T-cell (primary cell): ENCODE measurements at regions of chr3 and their contacts with region 1.

Region 1: DNA sequence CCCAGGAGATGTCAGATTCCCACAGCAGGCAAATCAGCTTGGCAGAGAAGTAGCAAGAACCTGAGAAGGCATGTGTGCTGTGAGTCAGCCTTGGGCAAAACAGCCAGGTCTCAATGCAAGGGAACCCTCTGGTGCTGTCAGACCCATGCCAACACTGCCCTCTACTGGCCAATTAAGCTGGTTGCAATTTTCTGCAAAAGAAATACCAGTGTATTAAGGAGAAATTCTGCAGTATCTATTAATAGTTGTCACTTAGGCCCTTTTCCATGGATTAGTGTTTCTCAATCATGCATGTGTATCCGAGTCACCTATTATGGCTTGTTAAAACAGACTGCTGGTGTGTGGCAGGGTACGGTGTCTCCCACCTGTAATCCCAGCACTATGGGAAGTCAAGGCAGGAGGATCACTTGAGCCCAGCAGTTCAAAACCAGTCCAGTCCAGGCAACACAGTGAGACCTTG is 26.2 kb downstream of the MAP4 start:
- DNase-seq: peak; percentile 16 to 86 (median 61)
- ATAC-seq: peak; percentile 86 to 95 (median 91)
- H3K4me3 ChIP-seq: no peak overlapping the region
- H3K4me3 Mint-ChIP-seq: no peak overlapping the region
- H3K27ac ChIP-seq: no peak overlapping the region
- H3K27ac Mint-ChIP-seq: no peak overlapping the region
- H3K4me1 ChIP-seq: no peaks in the 10 kb centered on the region
- H3K4me1 Mint-ChIP-seq: peaks cover 3 to 5% (median 4%) of the 10 kb centered on the region in 3 donors
- H3K27me3 ChIP-seq: no peaks in the 10 kb centered on the region
- H3K27me3 Mint-ChIP-seq: no peaks in the 10 kb centered on the region

Region 2: DNA sequence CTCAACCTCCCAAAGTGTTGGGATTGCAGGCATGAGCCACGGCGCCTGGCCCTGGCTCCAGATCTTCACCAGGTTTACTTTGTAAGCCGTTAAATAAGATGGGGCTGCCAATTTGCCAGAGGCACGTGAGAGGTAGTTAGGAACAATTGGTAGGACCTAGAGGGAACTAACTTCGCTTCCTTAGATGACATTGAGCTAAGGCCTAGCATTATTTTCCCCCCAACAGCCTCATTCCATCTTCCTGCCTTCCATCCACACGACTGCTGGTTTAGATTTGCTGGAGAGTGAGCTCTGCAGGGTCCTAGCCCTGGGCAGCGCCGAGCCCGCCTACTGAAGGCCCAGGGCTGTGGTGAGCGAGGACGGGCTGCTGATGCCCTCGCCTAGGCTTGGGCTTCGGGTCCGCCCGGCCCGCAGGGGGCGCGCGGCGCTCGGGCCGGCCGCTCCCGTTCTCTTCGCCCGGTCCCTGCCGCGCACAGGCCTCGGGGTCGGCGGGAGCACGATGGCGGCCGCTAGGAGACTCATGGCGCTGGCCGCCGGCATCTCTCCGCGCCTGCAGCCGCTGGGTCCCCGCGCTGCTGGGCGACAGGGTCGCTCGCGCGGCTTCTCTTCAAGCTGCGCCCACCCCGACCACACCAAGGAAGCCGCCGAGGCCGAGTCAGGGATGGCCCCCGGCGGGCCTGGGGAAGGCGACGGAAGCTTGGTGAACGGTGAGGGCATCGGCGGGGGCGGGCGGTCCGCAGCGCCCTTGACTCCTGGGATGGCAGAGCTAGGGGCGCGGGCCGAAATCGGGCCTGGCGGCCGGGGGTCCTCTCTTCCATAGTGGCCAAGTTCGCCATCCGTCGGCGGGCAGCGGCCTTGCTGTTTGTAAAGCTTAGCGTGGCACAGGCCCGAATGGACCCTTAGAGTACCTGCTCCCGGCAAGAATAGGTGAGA is 165.2 kb before region 1 on chr3:
- CTCF ChIA-PET with region 1: interaction called, 3 to 20 read pairs
- POLR2A ChIA-PET with region 1: no interaction called
- DNase-seq: peak; percentile 46 to 89 (median 70)
- ATAC-seq: peak; percentile 98 to 99 (median 99)
- H3K4me3 ChIP-seq: peak overlapping the region; percentile 77 to 81
- H3K4me3 Mint-ChIP-seq: peak overlapping the region; percentile 83 to 87 (median 83)
- H3K27ac ChIP-seq: peak overlapping the region; percentile 66
- H3K27ac Mint-ChIP-seq: peak overlapping the region; percentile 68 to 92
- H3K4me1 ChIP-seq: peaks cover 10 to 23% of the 10 kb centered on the region in 2 experiments
- H3K4me1 Mint-ChIP-seq: peaks cover 20 to 36% (median 30%) of the 10 kb centered on the region in 3 donors
- H3K27me3 ChIP-seq: no peaks in the 10 kb centered on the region
- H3K27me3 Mint-ChIP-seq: no peaks in the 10 kb centered on the region

Region 3: DNA sequence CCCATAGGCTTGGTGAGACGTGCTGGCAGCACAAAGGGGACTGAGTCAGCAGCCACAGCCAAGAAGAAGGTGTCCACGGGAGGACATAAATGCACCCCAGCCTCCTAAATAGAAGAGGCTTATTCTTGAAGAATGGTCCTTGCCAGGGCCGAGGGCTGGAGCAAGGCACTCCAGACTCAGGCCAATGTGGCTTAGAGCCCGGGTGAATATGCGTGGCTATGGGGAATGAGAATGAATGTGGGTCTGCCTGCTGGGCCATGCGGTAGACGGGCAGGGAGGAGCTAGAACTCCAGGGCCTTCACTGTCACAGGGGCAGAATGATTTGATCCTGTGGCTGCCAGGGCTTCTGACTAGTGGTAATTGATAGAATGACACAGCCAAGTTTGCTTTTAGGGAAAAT is 153.0 kb before region 1 on chr3:
- CTCF ChIA-PET with region 1: interaction called, 9 to 27 read pairs
- POLR2A ChIA-PET with region 1: no interaction called
- DNase-seq: no peak
- ATAC-seq: no peak
- H3K4me3 ChIP-seq: no peak overlapping the region
- H3K4me3 Mint-ChIP-seq: no peak overlapping the region
- H3K27ac ChIP-seq: no peak overlapping the region
- H3K27ac Mint-ChIP-seq: no peak overlapping the region
- H3K4me1 ChIP-seq: no peaks in the 10 kb centered on the region
- H3K4me1 Mint-ChIP-seq: peaks cover 0 to 5% (median 3%) of the 10 kb centered on the region in 3 donors
- H3K27me3 ChIP-seq: no peaks in the 10 kb centered on the region
- H3K27me3 Mint-ChIP-seq: no peaks in the 10 kb centered on the region

Region 4: DNA sequence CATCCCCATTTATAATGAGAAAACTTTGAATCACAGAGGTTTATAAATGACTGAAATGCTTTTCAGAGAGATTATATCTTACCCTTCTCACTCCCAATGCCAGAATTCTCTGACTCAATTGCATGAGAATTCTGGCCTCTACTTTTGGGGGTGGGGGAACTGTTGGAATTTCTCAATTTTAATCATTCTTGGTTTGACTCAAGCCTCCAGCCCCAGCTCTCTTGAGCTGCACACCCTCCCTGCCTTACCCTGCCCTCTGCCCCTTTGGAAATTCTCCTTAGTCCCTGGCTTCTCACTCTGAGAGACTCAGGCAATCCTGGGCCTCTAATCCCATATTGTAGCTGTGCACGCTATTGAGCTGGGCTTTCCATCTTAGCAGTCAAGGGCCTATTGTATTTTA is 295.1 kb after region 1 on chr3:
- CTCF ChIA-PET with region 1: no interaction called
- POLR2A ChIA-PET with region 1: no interaction called
- DNase-seq: no peak
- ATAC-seq: no peak
- H3K4me3 ChIP-seq: no peak overlapping the region
- H3K4me3 Mint-ChIP-seq: no peak overlapping the region
- H3K27ac ChIP-seq: no peak overlapping the region
- H3K27ac Mint-ChIP-seq: no peak overlapping the region
- H3K4me1 ChIP-seq: no peaks in the 10 kb centered on the region
- H3K4me1 Mint-ChIP-seq: peaks cover 0 to 5% (median 0%) of the 10 kb centered on the region in 3 donors
- H3K27me3 ChIP-seq: no peaks in the 10 kb centered on the region
- H3K27me3 Mint-ChIP-seq: no peaks in the 10 kb centered on the region